Activated CD4-positive, alpha-beta memory T cell treated with anti-CD3 and anti-CD28 coated beads, Interleukin-2, amount 10 ng/mL, durations not matched to agents 7 days and 5 days (primary cell): ENCODE measurements at regions of chr16 and their contacts with region 1.

Region 1: DNA sequence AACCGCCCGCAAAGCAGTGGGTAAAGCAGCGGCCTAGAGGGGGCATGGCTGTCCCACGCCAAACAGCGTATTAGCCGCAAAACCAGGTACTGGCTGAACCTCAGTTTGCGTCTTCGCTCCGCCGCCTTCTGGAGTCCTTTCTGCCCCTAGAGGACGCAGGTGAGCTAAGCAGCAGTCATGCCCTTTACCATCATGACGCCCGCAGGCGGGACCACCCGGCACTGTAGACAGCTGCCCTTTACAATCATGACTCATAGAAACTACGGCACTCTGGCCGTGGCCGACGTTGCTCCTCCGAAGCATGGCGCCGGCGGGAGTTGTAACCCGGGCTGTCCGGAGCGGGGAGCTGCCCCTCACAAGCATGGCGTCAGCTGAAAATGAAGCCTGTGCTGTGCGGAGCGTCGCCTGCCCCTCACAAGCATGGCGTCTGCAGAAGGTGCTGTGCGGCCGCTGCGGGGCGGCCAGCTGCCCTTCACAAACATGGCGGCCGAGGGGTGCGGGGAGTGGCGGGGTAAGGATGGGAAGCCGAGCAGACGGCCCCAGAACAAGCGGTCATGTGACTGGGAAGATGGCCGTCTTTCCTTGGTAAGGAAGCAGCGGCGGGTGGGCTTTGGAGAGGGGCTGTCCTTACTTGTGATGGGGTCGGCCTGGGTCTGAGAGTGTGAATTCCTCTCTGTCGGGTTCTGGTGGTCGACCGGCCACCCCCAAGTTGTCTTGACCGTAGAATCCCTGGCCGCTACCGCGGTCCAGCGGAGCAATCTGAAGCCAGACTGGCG is at the start of gene VPS35L:
- DNase-seq: peak; percentile 96
- H3K4me3 Mint-ChIP-seq: peak within 1 kb of the TSS; percentile 86
- H3K27ac Mint-ChIP-seq: peak within 1 kb of the TSS; percentile 89
- H3K4me1 Mint-ChIP-seq: peaks cover 24% of the 10 kb centered on the region
- H3K27me3 Mint-ChIP-seq: no peaks in the 10 kb centered on the region
- total RNA-seq, gene VPS35L: 48.7 to 55.4 TPM

Region 2: DNA sequence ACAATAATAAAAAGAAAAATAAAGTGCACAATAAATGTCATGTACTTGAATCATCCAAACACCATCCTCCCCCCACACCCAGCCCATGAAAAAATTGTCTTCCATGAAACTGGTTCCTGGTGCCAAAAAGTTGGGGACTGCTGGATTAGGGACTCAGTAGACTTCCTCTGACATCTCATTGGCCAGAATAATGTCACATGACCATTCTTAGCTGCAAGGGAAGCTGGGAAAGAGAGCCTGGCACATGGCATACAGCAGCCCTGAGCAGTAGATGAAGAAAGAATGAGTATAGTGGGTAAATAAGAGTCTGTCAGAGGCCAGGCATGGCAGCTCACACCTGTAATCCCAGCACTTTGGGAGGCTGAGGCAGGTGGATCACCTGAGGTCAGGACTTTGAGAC is 429.1 kb before region 1 on chr16:
- CTCF ChIA-PET with region 1: no interaction called
- POLR2A ChIA-PET with region 1: no interaction called
- DNase-seq: no peak
- H3K4me3 Mint-ChIP-seq: no peak overlapping the region
- H3K27ac Mint-ChIP-seq: no peak overlapping the region
- H3K4me1 Mint-ChIP-seq: peaks cover 46% of the 10 kb centered on the region
- H3K27me3 Mint-ChIP-seq: no peaks in the 10 kb centered on the region

Region 3: DNA sequence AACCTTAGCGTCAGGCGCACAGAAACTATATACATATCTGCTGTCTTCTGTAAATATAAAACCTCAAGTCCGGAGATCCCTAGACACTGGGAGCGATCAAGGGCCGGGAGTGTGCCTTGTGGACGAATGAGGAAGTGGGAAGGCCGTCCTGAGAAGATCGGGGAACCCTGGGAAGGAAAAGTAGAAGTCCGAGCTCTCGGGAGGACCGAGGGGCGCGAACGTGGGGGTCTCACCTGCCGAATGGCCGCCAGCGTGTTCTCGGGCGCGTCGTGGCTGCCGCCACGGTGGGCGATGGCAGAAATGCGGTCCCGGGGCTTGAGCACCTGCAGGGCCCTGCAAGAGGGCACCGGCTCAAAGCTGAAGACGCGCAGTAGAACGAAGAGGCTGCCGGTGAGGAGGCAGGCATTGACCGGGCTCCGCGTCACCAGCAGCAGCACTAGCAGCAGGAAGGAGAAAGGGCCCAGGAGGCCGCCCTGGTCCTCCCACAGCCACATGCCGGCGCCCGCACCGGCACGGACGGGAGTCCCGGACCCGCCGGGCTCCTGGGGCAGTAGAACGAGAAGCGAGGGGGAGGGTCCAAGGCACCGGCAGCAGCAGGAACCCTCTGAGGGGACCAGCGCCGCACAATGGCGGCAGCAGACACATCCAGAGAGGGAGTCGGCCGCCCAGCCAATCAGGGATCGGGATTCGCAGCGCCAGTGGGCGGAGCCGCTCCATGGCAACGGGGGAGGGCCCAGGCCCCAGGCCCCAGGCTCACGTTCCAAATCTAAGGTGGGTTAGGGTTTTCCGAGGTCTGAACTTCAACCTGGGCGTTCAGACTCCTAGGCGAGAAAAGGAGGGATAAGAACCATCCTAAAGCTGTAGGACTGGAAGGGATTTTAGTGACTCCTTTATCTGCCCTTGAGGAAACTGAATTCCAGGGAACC is 33.6 kb before region 1 on chr16 and contains the start of gene GDE1:
- CTCF ChIA-PET with region 1: interaction called, 30 read pairs
- POLR2A ChIA-PET with region 1: interaction called, 103 read pairs
- DNase-seq: peak; percentile 94
- H3K4me3 Mint-ChIP-seq: peak within 1 kb of the TSS; percentile 93
- H3K27ac Mint-ChIP-seq: peak within 1 kb of the TSS; percentile 89
- H3K4me1 Mint-ChIP-seq: peaks cover 67% of the 10 kb centered on the region
- H3K27me3 Mint-ChIP-seq: no peaks in the 10 kb centered on the region
- total RNA-seq, gene GDE1: 54.6 to 55.4 TPM

Region 4: GRCh38 chr16:19567560-19567959 is 12.2 kb after region 1 on chr16:
- CTCF ChIA-PET with region 1: interaction called, 16 read pairs
- POLR2A ChIA-PET with region 1: interaction called, 4 read pairs
- DNase-seq: no peak
- H3K4me3 Mint-ChIP-seq: no peak overlapping the region
- H3K27ac Mint-ChIP-seq: no peak overlapping the region
- H3K4me1 Mint-ChIP-seq: no peaks in the 10 kb centered on the region
- H3K27me3 Mint-ChIP-seq: no peaks in the 10 kb centered on the region

Region 5: DNA sequence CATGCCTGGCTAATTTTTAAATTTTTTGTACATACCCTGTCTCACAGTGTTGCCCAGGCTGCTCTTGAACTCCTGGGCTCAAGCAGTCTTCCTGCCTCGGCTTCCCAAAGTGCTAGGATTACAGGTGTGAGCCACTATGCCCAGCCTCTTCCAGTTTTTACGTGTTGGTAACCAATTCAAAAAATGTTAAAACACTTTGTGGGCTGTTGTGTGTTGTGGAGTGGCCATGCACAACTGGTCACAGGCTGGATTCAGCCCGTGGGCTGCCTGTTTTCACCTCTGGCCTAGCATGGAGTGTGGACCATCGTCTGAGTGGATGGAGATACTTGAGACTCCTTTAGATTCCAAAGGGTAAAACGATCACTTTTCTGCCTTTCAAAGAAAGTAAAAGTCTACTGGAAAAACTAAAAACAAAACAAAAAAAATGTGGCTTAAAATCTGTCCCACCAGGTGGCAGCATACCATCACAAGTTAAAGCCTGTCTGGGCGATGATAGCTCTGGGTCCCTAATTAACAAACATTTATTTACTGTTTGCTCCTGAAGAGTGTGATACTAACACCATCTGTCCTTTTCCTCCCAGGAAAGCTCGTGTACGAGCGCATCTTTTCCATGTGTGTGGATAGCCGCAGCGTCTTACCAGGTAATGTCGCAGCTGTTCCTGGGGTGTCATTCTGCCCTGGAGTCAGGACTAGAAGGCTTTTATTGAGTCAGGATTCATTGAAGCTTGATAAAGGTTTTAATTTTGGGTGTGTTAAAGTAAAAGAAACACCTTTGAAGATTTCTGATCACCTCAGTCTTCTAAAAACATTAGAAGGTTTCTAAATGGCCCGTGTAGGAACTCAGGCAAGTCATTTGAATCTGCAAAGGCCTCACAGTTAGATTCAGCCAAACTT is 46.0 kb after region 1 on chr16:
- CTCF ChIA-PET with region 1: interaction called, 10 read pairs
- POLR2A ChIA-PET with region 1: no interaction called
- DNase-seq: peak; percentile 39
- H3K4me3 Mint-ChIP-seq: no peak overlapping the region
- H3K27ac Mint-ChIP-seq: peak overlapping the region; percentile 21
- H3K4me1 Mint-ChIP-seq: peaks cover 2% of the 10 kb centered on the region
- H3K27me3 Mint-ChIP-seq: no peaks in the 10 kb centered on the region